ENCODE measurements at regions of chr4 and their contacts with region 1.

Region 1: DNA sequence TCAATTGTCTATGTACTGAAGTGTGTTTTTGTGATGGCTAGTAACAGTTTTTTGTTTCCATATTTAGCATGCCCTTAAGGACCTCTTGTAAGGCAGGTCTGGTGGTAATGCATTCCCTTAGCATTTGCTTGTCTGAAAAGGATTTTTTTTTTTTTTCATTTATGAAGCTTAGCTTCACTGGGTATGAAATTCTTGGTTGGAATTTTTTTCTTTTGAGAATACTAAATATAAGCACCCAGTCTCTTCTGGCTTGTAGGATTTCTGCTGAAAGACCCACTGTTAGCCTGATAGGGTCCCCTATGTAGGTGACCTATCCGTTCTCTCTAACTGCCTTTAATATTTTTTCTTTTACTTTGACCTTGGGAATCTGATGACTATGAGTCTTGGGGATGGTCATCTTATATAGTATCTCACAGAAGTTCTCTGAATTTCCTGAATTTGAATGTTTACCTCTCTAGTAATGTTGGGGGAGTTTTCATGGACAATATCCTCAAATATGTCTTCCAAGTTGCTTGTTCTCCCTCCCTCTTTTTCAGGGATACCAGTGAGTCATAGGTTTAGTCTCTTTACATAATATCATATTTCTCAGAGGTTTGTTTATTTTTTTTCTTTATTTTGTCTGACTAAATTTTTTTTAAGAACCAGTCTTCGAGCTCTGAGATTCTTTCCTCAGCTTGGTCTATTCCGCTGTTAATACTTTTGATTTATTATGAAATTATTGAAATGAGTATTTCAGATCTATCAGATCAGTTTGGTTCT is 157.1 kb upstream of the PGRMC2 start:
- DNase-seq: no peak
- ATAC-seq: no peak
- H3K4me3 ChIP-seq: no peak overlapping the region
- H3K27ac ChIP-seq: no peak overlapping the region
- H3K4me1 ChIP-seq: no peaks in the 10 kb centered on the region
- H3K27me3 ChIP-seq: no peaks in the 10 kb centered on the region

Region 2: GRCh38 chr4:128275346-128275745 is 169.4 kb before region 1 on chr4:
- intact Hi-C with region 1: loop called in 1 of 4 experiments (anchors 10 kb)
- DNase-seq: no peak
- ATAC-seq: no peak
- H3K4me3 ChIP-seq: no peak overlapping the region
- H3K27ac ChIP-seq: no peak overlapping the region
- H3K4me1 ChIP-seq: no peaks in the 10 kb centered on the region
- H3K27me3 ChIP-seq: no peaks in the 10 kb centered on the region

Region 3: DNA sequence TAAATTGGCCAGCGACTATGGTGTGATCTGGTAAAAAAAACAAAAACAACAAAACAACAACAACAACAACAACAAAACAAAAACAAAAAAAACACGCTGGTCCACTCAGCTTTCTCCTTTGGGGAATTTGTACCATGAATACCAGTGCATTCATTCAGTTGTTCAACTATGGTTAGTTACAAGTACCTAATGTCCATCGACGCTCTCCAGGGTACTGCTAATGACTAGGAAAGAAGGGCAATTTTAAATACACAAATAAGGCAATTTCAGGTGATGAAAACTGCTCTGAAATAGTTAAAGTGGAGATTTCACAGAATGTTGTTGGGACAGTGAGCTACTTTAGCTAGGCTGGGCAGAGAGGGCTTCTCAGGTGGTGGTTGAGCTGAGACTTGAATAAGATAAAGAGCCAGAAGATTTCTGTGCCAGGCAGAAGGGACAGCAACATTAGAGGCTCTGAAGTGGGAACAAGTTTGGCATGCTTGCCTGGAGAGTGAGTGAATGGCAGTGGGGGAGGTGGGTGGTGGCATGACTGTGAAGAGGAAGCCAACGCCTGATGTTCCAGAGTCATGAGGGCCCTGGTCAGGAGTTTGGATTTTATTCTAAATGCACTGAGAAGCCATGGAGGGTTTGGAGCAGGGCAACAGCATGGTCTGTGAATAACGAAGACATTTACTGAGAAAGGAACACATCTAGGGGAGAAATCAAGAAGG is 111.3 kb before region 1 on chr4:
- intact Hi-C with region 1: no loop called
- DNase-seq: no peak
- ATAC-seq: no peak
- H3K4me3 ChIP-seq: no peak overlapping the region
- H3K27ac ChIP-seq: peak overlapping the region; percentile 26
- H3K4me1 ChIP-seq: no peaks in the 10 kb centered on the region
- H3K27me3 ChIP-seq: no peaks in the 10 kb centered on the region

Measured in right cardiac atrium (tissue), 5 donors.